ENCODE measurements at regions of chr1 and their contacts with region 1.

Region 1: DNA sequence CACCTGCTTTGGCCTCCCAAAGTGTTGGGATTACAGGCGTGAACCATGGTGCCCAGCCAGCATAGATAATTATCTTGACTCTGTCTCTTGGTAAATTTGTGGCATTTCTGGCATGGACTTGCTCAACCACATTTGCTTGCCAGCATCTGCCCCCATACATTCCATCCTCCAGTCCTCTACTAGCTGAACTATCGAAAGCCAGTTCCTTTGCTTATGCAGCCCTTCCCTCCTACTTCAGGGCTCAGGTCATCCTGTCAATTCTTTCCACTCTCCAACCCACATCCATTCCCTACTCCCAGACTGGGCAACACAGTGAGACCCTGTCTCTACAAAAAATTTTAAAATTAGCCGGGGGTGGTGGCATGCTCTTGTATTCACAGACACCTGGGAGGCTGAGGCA is 13.0 kb upstream of the UQCRHL start:
- DNase-seq: peak; percentile 72
- H3K4me3 ChIP-seq: no peak overlapping the region
- H3K27ac ChIP-seq: no peak overlapping the region
- H3K4me1 ChIP-seq: peaks cover 12% of the 10 kb centered on the region
- H3K27me3 ChIP-seq: no peaks in the 10 kb centered on the region
- CTCF ChIP-seq: no peak

Region 2: DNA sequence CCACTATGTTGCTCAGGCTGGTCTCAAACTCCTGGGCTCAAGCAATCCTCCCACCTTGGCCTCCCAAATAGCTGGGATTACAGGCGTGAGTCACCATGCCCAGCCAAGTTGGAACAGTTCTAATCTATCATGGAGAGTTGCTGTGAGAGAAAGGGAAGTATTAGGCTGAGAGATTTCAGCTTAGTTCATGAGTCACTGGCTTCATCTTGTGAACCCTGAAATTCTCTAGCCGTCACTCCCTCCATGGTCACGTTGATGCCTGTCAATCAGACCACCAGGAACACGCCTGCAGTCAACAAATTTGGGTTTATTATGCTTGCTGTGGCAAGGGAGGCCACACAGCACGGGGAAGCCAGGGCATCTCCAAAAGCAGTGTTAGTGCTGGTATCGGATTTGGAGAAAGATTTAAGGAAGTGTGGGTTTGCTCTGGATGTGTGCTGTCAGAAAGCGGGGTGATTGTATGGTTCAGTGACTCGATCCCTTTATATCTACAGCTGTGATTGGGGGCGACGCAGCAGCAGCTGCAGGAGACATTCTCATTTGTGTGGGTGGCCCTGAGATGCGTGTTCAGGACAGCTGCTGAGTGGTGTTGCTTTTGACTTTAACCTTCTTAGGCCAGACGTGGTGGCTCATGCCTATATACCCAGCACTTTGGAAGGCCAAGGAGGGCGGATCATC is 31.7 kb before region 1 on chr1:
- CTCF ChIA-PET with region 1: no interaction called
- dilution Hi-C with region 1: no loop called
- in situ Hi-C with region 1: no loop called
- intact Hi-C with region 1: loop called (anchors 1 kb)
- DNase-seq: peak; percentile 76
- H3K4me3 ChIP-seq: no peak overlapping the region
- H3K27ac ChIP-seq: peak overlapping the region; percentile 50
- H3K4me1 ChIP-seq: peaks cover 26% of the 10 kb centered on the region
- H3K27me3 ChIP-seq: no peaks in the 10 kb centered on the region
- CTCF ChIP-seq: no peak

Region 3: DNA sequence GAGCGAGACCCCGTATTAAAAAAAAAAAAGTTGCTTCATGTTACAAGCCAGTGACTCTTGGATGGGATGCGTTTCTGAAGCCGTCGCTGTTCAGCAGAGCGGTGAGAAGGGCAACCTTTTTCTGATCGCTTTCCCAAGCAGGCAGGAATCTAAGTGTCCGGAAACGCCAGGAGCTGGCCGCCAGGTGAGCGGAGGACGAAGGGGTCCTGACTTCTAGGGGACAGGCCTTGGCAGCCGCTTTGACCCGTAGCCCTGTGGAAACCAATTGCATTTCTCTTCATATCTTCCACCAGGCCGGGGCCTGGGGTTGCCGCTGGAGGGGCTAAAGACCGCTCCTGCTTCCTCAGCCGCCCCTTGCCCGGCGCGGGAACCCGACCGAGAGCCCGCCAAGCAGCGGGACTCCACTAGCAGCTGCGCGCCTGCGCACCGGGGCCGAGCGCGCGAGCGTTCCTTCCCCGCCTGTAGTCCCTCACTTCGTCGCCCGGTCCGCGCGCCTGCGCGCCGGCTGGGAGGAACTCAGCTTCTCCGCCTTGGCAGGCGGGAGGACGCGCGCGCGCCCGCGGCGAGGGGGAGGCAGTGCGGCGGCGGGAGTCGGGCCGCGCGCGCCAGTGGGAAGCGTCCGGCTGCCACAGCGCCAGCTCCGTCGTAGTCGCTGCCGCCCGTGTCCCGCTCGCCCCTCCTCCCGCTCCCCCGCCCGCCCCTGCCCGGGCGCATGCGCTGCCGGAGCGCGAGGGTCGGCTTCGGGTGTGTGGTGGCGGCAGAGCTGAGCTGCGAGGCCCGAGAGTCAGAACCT is 26.8 kb after region 1 on chr1 and contains the start of gene SPEN:
- CTCF ChIA-PET with region 1: interaction called, 5 read pairs
- dilution Hi-C with region 1: no loop called
- in situ Hi-C with region 1: no loop called
- intact Hi-C with region 1: loop called (anchors 1 kb)
- DNase-seq: peak; percentile 97
- H3K4me3 ChIP-seq: peak within 1 kb of the TSS; percentile 87 to 99 (median 98)
- H3K27ac ChIP-seq: peak within 1 kb of the TSS; percentile 98
- H3K4me1 ChIP-seq: peaks cover 24% of the 10 kb centered on the region
- H3K27me3 ChIP-seq: no peaks in the 10 kb centered on the region
- CTCF ChIP-seq: peak in 1 of 2 donors; percentile 2
- total RNA-seq, gene SPEN: 32.3 to 48.1 TPM

Region 4: DNA sequence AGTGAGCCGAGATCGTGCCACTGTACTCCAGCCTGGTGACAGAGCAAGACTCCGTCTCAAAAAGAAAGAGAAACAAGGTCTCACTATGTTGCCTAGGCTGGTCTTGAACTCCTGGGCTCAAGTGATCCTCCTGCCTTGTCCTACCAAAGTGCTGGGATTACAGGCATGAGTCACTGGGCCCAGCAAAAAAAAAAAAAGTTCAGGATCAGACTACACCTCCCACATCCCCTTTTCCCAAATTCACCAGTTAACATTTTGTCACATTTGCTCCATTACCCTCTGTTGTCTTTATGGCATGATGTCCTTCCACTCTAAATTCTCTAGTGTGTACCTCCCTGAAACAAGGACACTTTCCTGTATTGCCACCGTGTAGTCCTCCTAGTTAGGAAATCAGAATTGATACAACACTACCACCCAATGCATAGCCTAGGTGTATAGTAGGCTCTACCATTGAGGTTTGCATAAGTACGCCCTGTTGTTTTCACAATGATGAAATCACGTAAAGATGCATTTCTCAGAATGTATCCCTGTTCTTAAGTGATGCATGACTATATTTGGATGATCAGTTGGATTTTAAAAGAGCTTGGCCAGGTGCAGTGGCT is 37.7 kb after region 1 on chr1:
- CTCF ChIA-PET with region 1: no interaction called
- dilution Hi-C with region 1: no loop called
- in situ Hi-C with region 1: no loop called
- intact Hi-C with region 1: no loop called
- DNase-seq: no peak
- H3K4me3 ChIP-seq: no peak overlapping the region
- H3K27ac ChIP-seq: no peak overlapping the region
- H3K4me1 ChIP-seq: no peaks in the 10 kb centered on the region
- H3K27me3 ChIP-seq: no peaks in the 10 kb centered on the region
- CTCF ChIP-seq: no peak

Region 5: GRCh38 chr1:15885701-15886610 is 65.5 kb after region 1 on chr1:
- CTCF ChIA-PET with region 1: no interaction called
- dilution Hi-C with region 1: no loop called
- in situ Hi-C with region 1: no loop called
- intact Hi-C with region 1: loop called (anchors 2 kb)
- DNase-seq: peak; percentile 86
- H3K4me3 ChIP-seq: peak overlapping the region; percentile 14 to 34 (median 28)
- H3K27ac ChIP-seq: peak overlapping the region; percentile 35
- H3K4me1 ChIP-seq: peaks cover 18% of the 10 kb centered on the region
- H3K27me3 ChIP-seq: no peaks in the 10 kb centered on the region
- CTCF ChIP-seq: peak; percentile 15 to 32

Region 6: GRCh38 chr1:15937706-15938168 is 117.3 kb after region 1 on chr1:
- CTCF ChIA-PET with region 1: interaction called, 3 read pairs
- dilution Hi-C with region 1: no loop called
- in situ Hi-C with region 1: no loop called
- intact Hi-C with region 1: loop called (anchors 5 kb)
- DNase-seq: no peak
- H3K4me3 ChIP-seq: no peak overlapping the region
- H3K27ac ChIP-seq: no peak overlapping the region
- H3K4me1 ChIP-seq: no peaks in the 10 kb centered on the region
- H3K27me3 ChIP-seq: no peaks in the 10 kb centered on the region
- CTCF ChIP-seq: no peak

Measured in mammary epithelial cell (primary cell).